Kidney (tissue), 22 donors: ENCODE measurements at regions of chr15 and their contacts with region 1.

Region 1: DNA sequence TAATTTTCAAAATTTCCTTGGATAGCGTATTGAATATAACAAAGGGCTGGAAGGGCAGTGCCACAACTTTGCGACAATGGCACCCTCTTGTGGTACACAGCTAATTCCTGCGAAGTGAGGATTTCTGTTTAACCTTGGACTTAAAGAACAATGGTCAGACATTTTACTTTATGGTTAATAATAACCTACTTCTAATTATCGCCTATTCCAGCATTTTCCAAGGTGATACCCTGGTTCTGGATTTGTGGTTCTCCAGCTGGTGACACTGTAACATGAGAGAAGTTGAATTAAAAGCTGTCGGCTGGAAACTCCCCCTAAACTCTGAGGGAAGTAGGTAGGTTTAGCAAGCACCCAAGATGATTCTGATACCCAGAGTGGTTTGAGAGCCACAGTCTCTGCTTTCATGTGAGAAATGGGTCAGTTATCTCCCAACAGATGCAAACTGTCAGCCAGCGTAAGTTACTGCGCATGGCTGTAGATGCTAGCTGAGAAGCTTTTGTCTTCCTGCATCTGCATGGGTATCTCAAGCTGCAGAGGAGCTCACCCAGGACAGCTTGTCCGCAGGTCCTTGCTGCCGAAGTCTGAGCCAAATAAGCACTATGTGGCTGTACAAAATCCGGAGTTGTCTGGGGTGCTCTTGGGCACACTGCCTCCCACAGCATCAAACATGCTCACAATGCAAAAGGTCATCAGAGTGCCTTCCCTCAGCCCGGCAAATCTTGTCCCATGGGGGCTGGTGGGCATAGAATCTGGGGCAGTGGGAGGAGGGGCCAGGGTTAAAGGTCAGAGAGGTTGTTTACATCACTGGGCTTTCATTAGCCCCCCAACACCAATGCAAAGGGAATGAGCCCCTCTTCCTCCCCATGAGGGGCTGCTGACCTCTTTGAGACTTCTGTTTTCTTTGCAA is 6.6 kb upstream of the CHSY1 start:
- DNase-seq: peak in 4 of 5 donors; percentile 73 to 90 (median 81)
- H3K4me3 ChIP-seq: no peak overlapping the region
- H3K27ac ChIP-seq: no peak overlapping the region
- H3K4me1 ChIP-seq: peaks cover 0 to 7% (median 4%) of the 10 kb centered on the region in 3 donors
- H3K27me3 ChIP-seq: no peaks in the 10 kb centered on the region
- CTCF ChIP-seq: peak; percentile 89

Region 2: DNA sequence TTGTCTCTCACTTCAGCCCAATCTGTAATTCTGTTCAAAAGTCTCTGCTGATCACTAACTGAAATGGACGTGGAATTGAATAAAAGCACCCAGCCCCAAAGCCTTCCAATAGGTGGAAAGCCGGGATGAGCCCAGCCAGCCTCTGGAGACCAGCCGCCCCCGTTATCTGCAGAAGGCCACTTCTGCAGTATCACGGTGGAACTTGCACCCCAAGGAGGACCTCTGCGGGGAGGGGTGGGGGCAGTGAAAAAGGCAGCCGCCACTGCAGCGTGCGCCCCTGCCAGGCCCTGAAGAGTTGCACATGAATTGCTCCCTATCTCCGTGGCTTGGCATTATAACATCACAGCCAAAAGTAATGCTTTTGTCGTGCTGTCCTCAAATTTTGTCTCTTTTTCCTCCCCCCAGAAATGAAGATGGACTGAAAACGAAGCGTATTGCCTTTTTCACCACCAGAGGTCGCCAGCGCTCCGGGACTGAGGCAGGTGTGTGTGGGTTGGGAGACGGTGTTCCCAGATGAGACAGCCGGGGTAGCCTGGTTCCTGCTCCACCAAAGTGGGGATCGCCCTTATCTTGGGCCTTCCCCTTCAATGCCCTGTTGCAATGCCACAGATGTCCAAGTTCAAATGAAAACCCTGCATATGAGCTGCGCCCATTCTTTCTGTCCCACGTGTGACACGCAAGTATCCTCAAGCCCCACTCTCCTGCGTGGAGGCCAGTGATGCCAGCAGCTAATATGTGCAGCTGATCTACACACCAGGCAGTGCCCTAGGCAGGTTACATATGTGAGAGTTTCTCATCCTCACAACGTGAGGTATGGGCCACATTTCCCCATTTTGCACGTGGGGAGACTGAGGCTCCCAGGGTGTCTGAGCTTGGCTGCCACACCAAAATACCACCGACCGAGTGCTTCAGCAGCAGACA is 243.3 kb before region 1 on chr15:
- intact Hi-C with region 1: loop called (anchors 5 kb)
- DNase-seq: peak; percentile 78 to 89 (median 86)
- H3K4me3 ChIP-seq: no peak overlapping the region
- H3K27ac ChIP-seq: no peak overlapping the region
- H3K4me1 ChIP-seq: no peaks in the 10 kb centered on the region
- H3K27me3 ChIP-seq: no peaks in the 10 kb centered on the region
- CTCF ChIP-seq: peak; percentile 87

Region 3: GRCh38 chr15:101045236-101045646 is 213.2 kb before region 1 on chr15:
- intact Hi-C with region 1: no loop called
- DNase-seq: peak; percentile 32 to 95 (median 77)
- H3K4me3 ChIP-seq: no peak overlapping the region
- H3K27ac ChIP-seq: peak overlapping the region in 1 of 2 donors; percentile 67
- H3K4me1 ChIP-seq: no peaks in the 10 kb centered on the region
- H3K27me3 ChIP-seq: no peaks in the 10 kb centered on the region
- CTCF ChIP-seq: no peak

Region 4: GRCh38 chr15:101088788-101089583 is 169.5 kb before region 1 on chr15:
- intact Hi-C with region 1: loop called (anchors 5 kb)
- DNase-seq: peak; percentile 61 to 87 (median 76)
- H3K4me3 ChIP-seq: no peak overlapping the region
- H3K27ac ChIP-seq: no peak overlapping the region
- H3K4me1 ChIP-seq: peaks cover 5 to 24% (median 11%) of the 10 kb centered on the region in 3 donors
- H3K27me3 ChIP-seq: no peaks in the 10 kb centered on the region
- CTCF ChIP-seq: peak; percentile 95

Region 5: DNA sequence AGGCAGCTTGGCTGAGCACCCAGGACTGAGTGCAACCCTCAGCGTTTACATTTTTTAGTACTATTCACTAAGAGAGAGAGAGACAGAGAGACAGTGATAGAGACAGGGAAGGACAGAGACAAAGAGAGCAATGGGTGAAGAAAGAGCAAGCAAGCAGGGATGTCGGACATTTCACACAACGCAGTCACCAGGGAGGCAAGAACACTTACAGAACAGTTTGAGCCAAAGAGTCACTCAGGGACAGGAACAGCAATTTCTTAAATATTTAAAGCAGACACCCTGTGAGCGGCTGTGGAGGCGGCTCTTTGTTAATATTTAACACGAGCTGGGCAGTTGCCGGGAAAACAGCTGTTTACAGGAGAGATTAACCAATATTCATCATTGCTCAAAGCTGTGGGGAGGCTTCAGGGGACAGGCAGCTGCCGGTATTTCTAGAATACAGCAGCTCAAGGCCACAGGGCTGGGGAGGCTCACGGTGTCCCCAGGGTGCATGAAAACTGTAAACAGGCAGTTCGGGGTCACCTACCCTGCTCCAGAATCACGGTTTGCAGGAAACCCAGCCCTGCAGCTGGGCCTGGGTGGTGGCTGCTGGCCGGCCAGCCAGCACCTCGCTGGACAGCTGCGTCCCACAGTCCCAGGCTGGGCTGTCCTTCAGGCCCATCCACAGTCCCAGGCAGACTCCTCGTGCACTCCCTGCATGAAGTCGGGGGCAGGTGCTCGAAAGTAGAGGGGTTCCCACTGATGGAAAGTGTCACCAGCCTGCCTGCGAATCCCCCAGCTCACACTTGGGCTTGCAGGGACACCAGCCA is 269.8 kb after region 1 on chr15:
- intact Hi-C with region 1: no loop called
- DNase-seq: peak in 4 of 5 donors; percentile 44 to 83 (median 64)
- H3K4me3 ChIP-seq: no peak overlapping the region
- H3K27ac ChIP-seq: peak overlapping the region; percentile 34 to 69
- H3K4me1 ChIP-seq: peaks cover 2 to 20% (median 16%) of the 10 kb centered on the region in 3 donors
- H3K27me3 ChIP-seq: no peaks in the 10 kb centered on the region
- CTCF ChIP-seq: no peak